Dorsolateral prefrontal cortex (tissue), 120 donors: ENCODE measurements at regions of chr3 and their contacts with region 1.

Region 1: GRCh38 chr3:44624749-44625480 is at the start of gene ZNF197:
- DNase-seq: peak; percentile 81 to 93 (median 90)
- H3K4me3 ChIP-seq: peak within 1 kb of the TSS; percentile 48 to 98 (median 93)
- H3K27ac ChIP-seq: peak within 1 kb of the TSS in 57 of 59 donors; percentile 14 to 94 (median 86)
- H3K27me3 ChIP-seq: no peaks in the 10 kb centered on the region
- CTCF ChIP-seq: peak in 52 of 56 donors; percentile 16 to 70 (median 49)
- total RNA-seq, gene ZNF197: 18.3 to 34.0 (median 24.6) TPM

Region 2: GRCh38 chr3:44477312-44478030 is 147.4 kb before region 1 on chr3 and contains the start of gene ZNF445:
- intact Hi-C with region 1: loop called (anchors 2 to 10 kb)
- DNase-seq: peak; percentile 58 to 92 (median 77)
- H3K4me3 ChIP-seq: peak within 1 kb of the TSS; percentile 39 to 94 (median 80)
- H3K27ac ChIP-seq: peak within 1 kb of the TSS in 54 of 59 donors; percentile 20 to 91 (median 75)
- H3K27me3 ChIP-seq: no peaks in the 10 kb centered on the region
- CTCF ChIP-seq: peak in 9 of 56 donors; percentile 13 to 57 (median 21)
- total RNA-seq, gene ZNF445: 30.2 to 47.3 (median 38.2) TPM

Region 3: GRCh38 chr3:44584646-44585501 is 40.0 kb before region 1 on chr3 and contains the start of gene ZNF660:
- intact Hi-C with region 1: loop called in 1 of 2 experiments (anchors 2 kb)
- DNase-seq: peak; percentile 32 to 86 (median 72)
- H3K4me3 ChIP-seq: peak within 1 kb of the TSS; percentile 53 to 93 (median 82)
- H3K27ac ChIP-seq: peak within 1 kb of the TSS in 50 of 59 donors; percentile 23 to 88 (median 72)
- H3K27me3 ChIP-seq: no peaks in the 10 kb centered on the region
- CTCF ChIP-seq: peak in 3 of 56 donors; percentile 7 to 14 (median 13)
- total RNA-seq, gene ZNF660: 3.6 to 15.0 (median 8.9) TPM

Region 4: DNA sequence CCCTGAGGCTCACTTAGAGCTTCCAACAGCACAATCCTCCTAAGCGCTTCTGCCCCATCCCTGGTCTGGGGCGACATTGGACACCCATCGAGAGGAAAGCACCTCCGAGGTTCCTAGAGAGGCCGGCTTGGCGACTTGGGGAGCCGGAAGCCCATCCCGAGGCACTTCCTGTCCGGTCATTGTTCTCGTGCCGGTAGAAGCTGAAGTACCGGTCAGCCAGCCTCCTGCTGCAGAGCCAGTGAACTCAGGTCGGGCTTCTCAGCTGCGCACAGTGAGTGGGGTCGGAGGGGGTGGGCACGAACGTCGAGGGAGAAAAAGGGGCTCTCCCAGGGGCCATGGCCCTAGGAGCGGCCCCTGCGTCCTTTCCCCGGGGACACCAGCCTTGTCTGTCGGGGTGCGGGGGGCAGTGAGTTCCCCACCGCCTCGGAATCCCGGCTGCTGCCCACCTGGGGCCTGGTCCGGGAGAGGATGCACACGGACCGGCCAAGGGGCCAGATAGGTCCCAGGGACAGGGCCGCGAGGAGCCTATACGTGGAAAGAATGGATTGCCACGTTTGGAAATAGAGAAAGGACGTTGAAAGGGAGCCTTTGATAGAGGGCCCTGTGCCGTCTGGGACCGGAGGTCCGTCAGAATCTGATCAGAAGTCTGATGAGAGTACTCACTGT is 23.8 kb after region 1 on chr3 and contains the start of gene ZNF35:
- intact Hi-C with region 1: loop called (anchors 1 to 2 kb)
- DNase-seq: peak; percentile 72 to 91 (median 88)
- H3K4me3 ChIP-seq: peak within 1 kb of the TSS; percentile 64 to 99 (median 93)
- H3K27ac ChIP-seq: peak within 1 kb of the TSS in 47 of 59 donors; percentile 1 to 87 (median 58)
- H3K27me3 ChIP-seq: no peaks in the 10 kb centered on the region
- CTCF ChIP-seq: peak in 16 of 56 donors; percentile 12 to 47 (median 24)
- total RNA-seq, gene ZNF35: 8.3 to 19.8 (median 12.1) TPM

Region 5: DNA sequence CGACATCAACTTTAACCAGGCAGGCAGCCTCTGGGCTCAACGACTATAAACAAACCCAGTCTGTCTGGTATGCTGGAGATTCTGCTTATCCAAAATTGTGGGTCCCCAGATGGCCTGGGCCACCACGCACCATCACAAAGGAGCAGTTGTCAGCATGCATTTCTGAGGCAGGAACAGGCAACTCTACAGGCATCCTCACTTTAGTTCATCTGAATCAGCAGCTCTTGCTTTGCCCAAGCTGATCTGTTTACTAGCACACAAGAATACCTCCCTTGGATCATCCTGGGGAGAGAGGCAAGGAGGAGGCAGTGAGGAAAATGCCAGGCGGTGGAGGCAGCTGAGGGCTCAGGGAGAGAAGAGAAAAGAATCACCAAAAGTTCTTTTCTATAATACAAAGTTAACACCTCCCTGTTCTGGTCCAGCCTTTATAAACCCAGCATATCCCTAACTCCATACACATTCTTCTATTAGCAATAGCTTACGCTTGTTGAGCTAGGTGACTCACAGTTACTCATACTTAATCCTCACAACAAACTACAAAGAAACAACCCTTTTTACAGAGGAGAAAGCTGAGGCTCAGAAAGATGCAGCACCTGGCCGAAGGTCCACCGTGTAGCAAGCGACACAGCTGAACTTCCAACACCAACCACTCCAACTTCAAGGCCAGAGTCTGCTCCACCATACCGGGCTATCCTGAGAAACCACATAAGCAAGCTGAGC is 317.4 kb after region 1 on chr3:
- intact Hi-C with region 1: no loop called
- DNase-seq: no peak
- H3K4me3 ChIP-seq: no peak overlapping the region
- H3K27ac ChIP-seq: no peak overlapping the region
- H3K27me3 ChIP-seq: no peaks in the 10 kb centered on the region
- CTCF ChIP-seq: no peak